ENCODE measurements at regions of chr1 and their contacts with region 1.

Region 1: DNA sequence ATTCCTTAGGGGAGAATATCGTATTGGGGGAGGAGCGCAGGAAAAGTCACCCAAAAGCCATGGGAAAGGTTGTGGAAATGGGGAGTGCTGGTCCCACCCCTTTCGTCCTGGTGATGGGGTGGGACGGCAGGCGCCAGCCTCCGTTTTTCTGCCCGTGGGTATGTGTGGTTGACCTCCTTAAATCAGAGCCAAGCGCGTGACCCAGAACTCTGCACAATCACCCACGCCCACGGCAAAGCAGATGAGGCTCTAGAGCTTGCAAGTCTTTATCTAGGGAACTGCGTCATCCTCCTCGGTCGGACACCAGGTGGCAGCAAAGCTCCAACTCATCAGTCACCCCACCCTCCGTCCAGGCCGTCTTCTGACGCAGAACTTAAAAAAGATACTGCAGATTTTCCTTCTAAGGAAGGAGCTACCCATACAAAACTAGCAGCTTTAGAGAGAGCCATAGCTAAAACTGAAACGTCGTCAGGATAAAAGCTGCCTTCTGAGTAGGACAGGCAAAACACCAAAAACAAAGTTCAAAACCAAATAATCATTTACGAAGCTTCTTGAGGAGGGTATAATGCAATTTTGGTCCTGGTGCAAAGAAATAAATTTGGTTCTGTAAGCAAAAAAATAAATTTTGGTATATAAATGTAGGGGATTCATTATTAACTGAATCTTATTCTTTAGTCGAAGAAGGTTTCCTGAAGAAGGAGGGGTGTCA is 62.0 kb downstream of the TBX19 start:
- DNase-seq: peak; percentile 79 to 95 (median 88)
- ATAC-seq: peak; percentile 99
- H3K4me3 ChIP-seq: no peak overlapping the region
- H3K4me3 Mint-ChIP-seq: peak overlapping the region; percentile 54
- H3K27ac ChIP-seq: peak overlapping the region in 1 of 2 experiments; percentile 48
- H3K27ac Mint-ChIP-seq: peak overlapping the region; percentile 92
- H3K4me1 ChIP-seq: peaks cover 19% of the 10 kb centered on the region
- H3K4me1 Mint-ChIP-seq: peaks cover 32% of the 10 kb centered on the region
- H3K27me3 ChIP-seq: no peaks in the 10 kb centered on the region
- H3K27me3 Mint-ChIP-seq: no peaks in the 10 kb centered on the region
- CTCF ChIP-seq: peak; percentile 71

Region 2: GRCh38 chr1:168019407-168019806 is 323.3 kb before region 1 on chr1:
- CTCF ChIA-PET with region 1: no interaction called
- POLR2A ChIA-PET with region 1: no interaction called
- intact Hi-C with region 1: no loop called
- DNase-seq: no peak
- ATAC-seq: no peak
- H3K4me3 ChIP-seq: no peak overlapping the region
- H3K4me3 Mint-ChIP-seq: no peak overlapping the region
- H3K27ac ChIP-seq: no peak overlapping the region
- H3K27ac Mint-ChIP-seq: no peak overlapping the region
- H3K4me1 ChIP-seq: no peaks in the 10 kb centered on the region
- H3K4me1 Mint-ChIP-seq: no peaks in the 10 kb centered on the region
- H3K27me3 ChIP-seq: no peaks in the 10 kb centered on the region
- H3K27me3 Mint-ChIP-seq: no peaks in the 10 kb centered on the region
- CTCF ChIP-seq: no peak

Region 3: GRCh38 chr1:168328731-168329399 is 13.9 kb before region 1 on chr1:
- CTCF ChIA-PET with region 1: interaction called, 24 read pairs
- POLR2A ChIA-PET with region 1: interaction called, 8 read pairs
- intact Hi-C with region 1: no loop called
- DNase-seq: no peak
- ATAC-seq: no peak
- H3K4me3 ChIP-seq: no peak overlapping the region
- H3K4me3 Mint-ChIP-seq: no peak overlapping the region
- H3K27ac ChIP-seq: no peak overlapping the region
- H3K27ac Mint-ChIP-seq: no peak overlapping the region
- H3K4me1 ChIP-seq: no peaks in the 10 kb centered on the region
- H3K4me1 Mint-ChIP-seq: no peaks in the 10 kb centered on the region
- H3K27me3 ChIP-seq: no peaks in the 10 kb centered on the region
- H3K27me3 Mint-ChIP-seq: no peaks in the 10 kb centered on the region
- CTCF ChIP-seq: no peak

Region 4: GRCh38 chr1:168408536-168409242 is 66.0 kb after region 1 on chr1:
- CTCF ChIA-PET with region 1: interaction called, 4 read pairs
- POLR2A ChIA-PET with region 1: no interaction called
- intact Hi-C with region 1: loop called in 1 of 2 experiments (anchors 1 kb)
- DNase-seq: peak in 8 of 9 experiments; percentile 48 to 82 (median 58)
- ATAC-seq: peak; percentile 81
- H3K4me3 ChIP-seq: no peak overlapping the region
- H3K4me3 Mint-ChIP-seq: peak overlapping the region; percentile 42
- H3K27ac ChIP-seq: no peak overlapping the region
- H3K27ac Mint-ChIP-seq: peak overlapping the region; percentile 76
- H3K4me1 ChIP-seq: peaks cover 17% of the 10 kb centered on the region
- H3K4me1 Mint-ChIP-seq: peaks cover 46% of the 10 kb centered on the region
- H3K27me3 ChIP-seq: no peaks in the 10 kb centered on the region
- H3K27me3 Mint-ChIP-seq: no peaks in the 10 kb centered on the region
- CTCF ChIP-seq: no peak

Region 5: GRCh38 chr1:168572633-168573032 is 229.9 kb after region 1 on chr1:
- CTCF ChIA-PET with region 1: interaction called, 6 read pairs
- POLR2A ChIA-PET with region 1: no interaction called
- intact Hi-C with region 1: loop called (anchors 1 to 2 kb)
- DNase-seq: no peak
- ATAC-seq: no peak
- H3K4me3 ChIP-seq: no peak overlapping the region
- H3K4me3 Mint-ChIP-seq: no peak overlapping the region
- H3K27ac ChIP-seq: no peak overlapping the region
- H3K27ac Mint-ChIP-seq: no peak overlapping the region
- H3K4me1 ChIP-seq: peaks cover 3% of the 10 kb centered on the region
- H3K4me1 Mint-ChIP-seq: peaks cover 26% of the 10 kb centered on the region
- H3K27me3 ChIP-seq: no peaks in the 10 kb centered on the region
- H3K27me3 Mint-ChIP-seq: no peaks in the 10 kb centered on the region
- CTCF ChIP-seq: no peak

Region 6: DNA sequence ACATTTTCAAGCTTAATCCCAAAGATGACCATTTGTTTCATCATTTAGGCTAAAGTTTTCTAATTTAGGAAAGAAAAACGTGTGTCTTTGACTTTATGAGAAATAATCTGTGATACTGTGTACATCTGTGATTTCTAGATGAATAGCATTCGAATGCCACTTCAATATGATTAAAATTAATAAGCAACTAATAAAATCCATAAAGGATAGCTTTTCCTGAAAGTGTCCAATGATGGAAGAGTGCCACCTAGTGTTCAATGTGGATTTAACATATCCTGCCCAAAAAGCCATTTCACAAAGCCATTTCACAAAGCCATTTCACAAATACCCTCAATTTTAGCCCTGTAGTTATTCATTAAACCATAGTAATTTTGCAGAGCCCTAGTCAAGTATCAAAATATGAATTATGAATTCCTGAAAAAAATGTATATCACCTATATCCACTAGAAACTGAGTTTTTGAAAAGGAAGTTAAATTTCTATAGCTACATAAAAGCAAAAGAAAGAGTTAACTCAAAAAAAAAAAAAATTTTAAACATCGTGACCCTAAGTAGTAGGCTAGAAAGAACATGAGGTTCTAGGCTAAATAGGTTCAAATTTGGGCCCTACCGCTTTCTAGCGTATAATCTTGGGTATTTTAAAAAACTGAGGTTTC is 1005.8 kb after region 1 on chr1:
- CTCF ChIA-PET with region 1: interaction called, 95 read pairs
- POLR2A ChIA-PET with region 1: interaction called, 7 read pairs
- intact Hi-C with region 1: loop called (anchors 1 kb)
- DNase-seq: peak in 4 of 9 experiments; percentile 20 to 77 (median 44)
- ATAC-seq: peak; percentile 49
- H3K4me3 ChIP-seq: no peak overlapping the region
- H3K4me3 Mint-ChIP-seq: no peak overlapping the region
- H3K27ac ChIP-seq: no peak overlapping the region
- H3K27ac Mint-ChIP-seq: no peak overlapping the region
- H3K4me1 ChIP-seq: no peaks in the 10 kb centered on the region
- H3K4me1 Mint-ChIP-seq: peaks cover 8% of the 10 kb centered on the region
- H3K27me3 ChIP-seq: no peaks in the 10 kb centered on the region
- H3K27me3 Mint-ChIP-seq: no peaks in the 10 kb centered on the region
- CTCF ChIP-seq: peak; percentile 99

Region 7: GRCh38 chr1:169694304-169695075 is 1351.8 kb after region 1 on chr1:
- CTCF ChIA-PET with region 1: no interaction called
- POLR2A ChIA-PET with region 1: no interaction called
- intact Hi-C with region 1: loop called in 1 of 2 experiments (anchors 10 kb)
- DNase-seq: peak in 7 of 9 experiments; percentile 19 to 88 (median 58)
- ATAC-seq: peak; percentile 59
- H3K4me3 ChIP-seq: no peak overlapping the region
- H3K4me3 Mint-ChIP-seq: peak overlapping the region; percentile 60
- H3K27ac ChIP-seq: peak overlapping the region; percentile 50 to 74
- H3K27ac Mint-ChIP-seq: no peak overlapping the region
- H3K4me1 ChIP-seq: peaks cover 96% of the 10 kb centered on the region
- H3K4me1 Mint-ChIP-seq: peaks cover 71% of the 10 kb centered on the region
- H3K27me3 ChIP-seq: no peaks in the 10 kb centered on the region
- H3K27me3 Mint-ChIP-seq: no peaks in the 10 kb centered on the region
- CTCF ChIP-seq: peak; percentile 50